ENCODE measurements at regions of chr6 and their contacts with region 1.

Region 1: GRCh38 chr6:85756982-85757381 is 114.3 kb upstream of the SYNCRIP start:
- DNase-seq: no peak
- ATAC-seq: no peak
- H3K4me3 ChIP-seq: no peak overlapping the region
- H3K27ac ChIP-seq: no peak overlapping the region
- H3K4me1 ChIP-seq: no peaks in the 10 kb centered on the region
- H3K27me3 ChIP-seq: no peaks in the 10 kb centered on the region
- CTCF ChIP-seq: peak; percentile 10 to 36 (median 28); a peak in 3 of 6 replicates
- EP300 ChIP-seq: no peak
- POLR2A ChIP-seq: no peak
- RAD21 ChIP-seq: peak; percentile 61

Region 2: GRCh38 chr6:86192123-86192522 is 435.1 kb after region 1 on chr6:
- CTCF ChIA-PET with region 1: no interaction called
- POLR2A ChIA-PET with region 1: no interaction called
- RAD21 ChIA-PET with region 1: no interaction called
- SMC1A ChIA-PET with region 1: no interaction called
- in situ Hi-C with region 1: no loop called
- intact Hi-C with region 1: loop called (anchors 5 kb)
- DNase-seq: no peak
- ATAC-seq: peak; percentile 91
- H3K4me3 ChIP-seq: no peak overlapping the region
- H3K27ac ChIP-seq: no peak overlapping the region
- H3K4me1 ChIP-seq: no peaks in the 10 kb centered on the region
- H3K27me3 ChIP-seq: no peaks in the 10 kb centered on the region
- CTCF ChIP-seq: peak; percentile 25 to 45 (median 34); a peak in 3 of 6 replicates
- EP300 ChIP-seq: no peak
- POLR2A ChIP-seq: no peak
- RAD21 ChIP-seq: 0 out of 2 replicates have a peak, but pooled peaks have one; percentile 22

Region 3: GRCh38 chr6:86856937-86857563 is 1100.1 kb after region 1 on chr6:
- CTCF ChIA-PET with region 1: interaction called, 3 read pairs
- POLR2A ChIA-PET with region 1: no interaction called
- RAD21 ChIA-PET with region 1: no interaction called
- SMC1A ChIA-PET with region 1: no interaction called
- in situ Hi-C with region 1: no loop called
- intact Hi-C with region 1: loop called (anchors 5 kb)
- DNase-seq: no peak
- ATAC-seq: peak; percentile 67
- H3K4me3 ChIP-seq: no peak overlapping the region
- H3K27ac ChIP-seq: no peak overlapping the region
- H3K4me1 ChIP-seq: no peaks in the 10 kb centered on the region
- H3K27me3 ChIP-seq: no peaks in the 10 kb centered on the region
- CTCF ChIP-seq: peak; percentile 63 to 77 (median 67)
- EP300 ChIP-seq: no peak
- POLR2A ChIP-seq: no peak
- RAD21 ChIP-seq: peak; percentile 59